HEK293T (cell line): ENCODE measurements at regions of chr18 and their contacts with region 1.

Region 1: GRCh38 chr18:24426398-24427294 is at the start of gene IMPACT:
- DNase-seq: peak; percentile 98

Region 2: GRCh38 chr18:24189007-24189528 is 237.6 kb before region 1 on chr18:
- CTCF ChIA-PET with region 1: no interaction called
- POLR2A ChIA-PET with region 1: no interaction called
- DNase-seq: no peak

Region 3: DNA sequence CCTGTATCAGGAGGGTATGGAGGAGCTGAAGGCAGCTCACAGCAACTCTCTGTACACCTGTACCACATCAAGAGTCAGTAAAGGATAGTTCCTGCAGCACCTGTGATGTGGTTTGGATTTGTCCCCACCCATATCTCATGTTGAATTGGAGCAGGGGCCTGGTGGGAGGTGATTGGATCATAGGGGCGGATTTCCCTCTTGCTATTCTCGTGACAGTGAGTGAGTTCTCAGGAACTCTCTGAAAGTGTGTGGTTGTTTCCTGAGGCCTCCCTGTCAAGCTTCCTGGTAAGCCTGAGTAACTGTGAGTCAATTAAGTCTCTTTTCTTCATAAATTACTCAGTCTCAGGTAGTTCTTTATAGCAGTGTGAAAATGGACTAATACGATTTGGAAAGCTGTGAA is 57.9 kb before region 1 on chr18:
- CTCF ChIA-PET with region 1: no interaction called
- POLR2A ChIA-PET with region 1: no interaction called
- DNase-seq: no peak

Region 4: GRCh38 chr18:24397694-24398365 is 28.8 kb before region 1 on chr18 and contains the start of gene OSBPL1A:
- CTCF ChIA-PET with region 1: interaction called, 4 read pairs
- POLR2A ChIA-PET with region 1: interaction called, 19 read pairs
- DNase-seq: peak; percentile 98

Region 5: GRCh38 chr18:24413148-24413547 is 13.5 kb before region 1 on chr18:
- CTCF ChIA-PET with region 1: interaction called, 3 read pairs
- POLR2A ChIA-PET with region 1: interaction called, 24 read pairs
- DNase-seq: no peak